Ascending aorta (tissue), 2 donors: ENCODE measurements at regions of chr3 and their contacts with region 1.

Region 1: DNA sequence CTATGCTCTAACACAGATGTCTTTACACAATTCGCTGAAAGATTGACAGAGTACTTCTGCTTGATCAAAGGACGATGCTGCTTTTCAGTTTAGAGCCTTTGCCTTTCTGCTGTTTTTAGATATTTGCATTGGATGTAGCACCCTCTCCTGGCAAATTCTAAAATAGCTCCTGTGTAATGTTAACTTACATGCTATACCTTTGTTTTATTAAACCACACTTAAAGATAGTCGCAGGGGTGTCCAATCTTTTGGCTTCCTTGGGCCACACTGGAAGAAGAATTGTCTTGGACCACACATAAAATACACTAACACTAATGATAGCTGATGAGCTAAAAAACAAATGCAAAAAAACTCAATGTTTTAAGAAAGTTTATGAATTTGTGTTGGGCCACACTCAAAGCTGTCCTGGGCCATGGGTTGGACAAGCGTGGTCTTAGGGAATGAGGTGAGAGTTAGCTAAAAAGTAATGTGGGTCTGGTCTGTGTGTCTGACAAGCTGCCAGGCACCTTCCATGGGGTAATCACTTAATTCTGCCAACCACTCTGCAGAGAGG is 62.9 kb downstream of the ATG7 start:
- DNase-seq: no peak
- H3K4me3 ChIP-seq: no peak overlapping the region
- H3K27ac ChIP-seq: no peak overlapping the region
- H3K4me1 ChIP-seq: no peaks in the 10 kb centered on the region
- H3K27me3 ChIP-seq: no peaks in the 10 kb centered on the region
- CTCF ChIP-seq: peak; percentile 64 to 70 (median 67)

Region 2: DNA sequence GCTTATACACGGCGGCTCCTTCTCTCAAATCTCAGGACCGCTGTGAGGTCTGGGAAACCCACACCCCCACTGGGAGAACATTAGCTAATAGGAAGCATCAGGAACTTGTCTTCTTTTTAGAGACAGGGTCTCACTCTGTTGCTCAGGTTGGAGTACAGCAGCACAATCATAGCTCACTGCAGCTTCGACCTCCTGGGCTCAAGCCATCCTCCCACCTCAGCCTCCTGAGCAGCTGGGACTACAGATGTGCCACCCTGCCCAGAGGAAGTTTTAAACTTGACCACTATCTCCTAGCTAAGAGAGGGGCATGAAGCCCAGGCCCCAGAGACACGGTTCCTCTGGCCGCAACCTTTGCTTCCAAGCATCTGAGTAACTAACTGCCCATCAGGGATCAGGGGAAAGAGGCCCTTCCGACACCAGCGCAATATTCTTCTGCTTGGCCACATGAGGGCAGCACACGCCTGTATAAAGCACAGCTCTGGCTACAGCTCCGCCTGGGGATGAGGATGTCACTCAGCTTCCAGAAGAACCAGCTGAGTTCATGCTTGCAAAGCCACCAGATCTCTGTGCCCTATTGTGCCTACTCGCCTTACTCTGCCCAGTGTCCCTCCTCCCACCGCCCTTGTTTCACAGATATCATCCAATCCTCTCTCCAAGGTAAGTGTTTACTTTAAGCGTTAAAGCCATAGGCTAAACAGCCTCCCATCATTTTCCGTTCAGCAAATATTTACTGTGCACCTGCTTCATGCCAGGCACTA is 576.6 kb before region 1 on chr3:
- intact Hi-C with region 1: loop called (anchors 5 kb)
- DNase-seq: no peak
- H3K4me3 ChIP-seq: no peak overlapping the region
- H3K27ac ChIP-seq: no peak overlapping the region
- H3K4me1 ChIP-seq: no peaks in the 10 kb centered on the region
- H3K27me3 ChIP-seq: no peaks in the 10 kb centered on the region
- CTCF ChIP-seq: peak; percentile 49 to 59 (median 53)

Region 3: DNA sequence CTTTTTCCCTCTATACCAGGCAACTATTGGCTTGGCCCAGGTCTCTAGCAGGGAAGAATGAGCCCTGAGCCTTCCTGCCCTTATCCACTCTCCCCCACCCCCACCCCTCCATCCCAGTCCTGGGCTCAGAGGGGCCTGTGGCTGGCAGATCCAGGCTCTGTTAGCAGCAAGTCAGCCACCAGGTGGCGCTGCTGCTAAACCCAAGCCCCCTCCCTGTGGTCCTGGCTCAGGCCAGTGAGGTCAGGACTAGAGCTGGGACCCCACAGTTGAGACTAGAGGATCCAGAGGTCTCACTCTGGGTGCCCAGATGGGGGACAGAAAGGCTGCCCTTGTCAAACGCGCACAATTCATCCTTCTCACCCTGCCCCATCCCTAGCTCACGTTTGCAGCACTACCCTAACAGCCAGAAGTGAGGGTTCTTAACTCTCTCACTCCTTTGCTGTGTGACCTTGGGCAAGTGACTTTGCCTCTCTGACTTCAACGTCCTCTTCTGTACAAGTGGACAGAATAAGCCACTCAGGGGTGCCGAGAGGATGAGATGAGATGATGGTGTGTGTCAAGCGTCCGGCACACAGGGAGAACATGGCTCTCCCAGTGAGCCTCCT is 389.3 kb before region 1 on chr3:
- intact Hi-C with region 1: loop called (anchors 5 kb)
- DNase-seq: no peak
- H3K4me3 ChIP-seq: no peak overlapping the region
- H3K27ac ChIP-seq: no peak overlapping the region
- H3K4me1 ChIP-seq: no peaks in the 10 kb centered on the region
- H3K27me3 ChIP-seq: no peaks in the 10 kb centered on the region
- CTCF ChIP-seq: peak; percentile 68 to 91 (median 72)

Region 4: GRCh38 chr3:11576453-11576852 is 241.3 kb after region 1 on chr3:
- intact Hi-C with region 1: no loop called
- DNase-seq: no peak
- H3K4me3 ChIP-seq: no peak overlapping the region
- H3K27ac ChIP-seq: peak overlapping the region; percentile 15 to 46
- H3K4me1 ChIP-seq: peaks cover 0 to 15% of the 10 kb centered on the region in 2 donors
- H3K27me3 ChIP-seq: no peaks in the 10 kb centered on the region
- CTCF ChIP-seq: no peak